RWPE1 (cell line): ENCODE measurements at regions of chr4 and their contacts with region 1.

Region 1: GRCh38 chr4:182938205-182938645 is 21.0 kb upstream of the DCTD start:
- DNase-seq: peak; percentile 68
- H3K27ac ChIP-seq: no peak overlapping the region
- CTCF ChIP-seq: peak; percentile 95

Region 2: DNA sequence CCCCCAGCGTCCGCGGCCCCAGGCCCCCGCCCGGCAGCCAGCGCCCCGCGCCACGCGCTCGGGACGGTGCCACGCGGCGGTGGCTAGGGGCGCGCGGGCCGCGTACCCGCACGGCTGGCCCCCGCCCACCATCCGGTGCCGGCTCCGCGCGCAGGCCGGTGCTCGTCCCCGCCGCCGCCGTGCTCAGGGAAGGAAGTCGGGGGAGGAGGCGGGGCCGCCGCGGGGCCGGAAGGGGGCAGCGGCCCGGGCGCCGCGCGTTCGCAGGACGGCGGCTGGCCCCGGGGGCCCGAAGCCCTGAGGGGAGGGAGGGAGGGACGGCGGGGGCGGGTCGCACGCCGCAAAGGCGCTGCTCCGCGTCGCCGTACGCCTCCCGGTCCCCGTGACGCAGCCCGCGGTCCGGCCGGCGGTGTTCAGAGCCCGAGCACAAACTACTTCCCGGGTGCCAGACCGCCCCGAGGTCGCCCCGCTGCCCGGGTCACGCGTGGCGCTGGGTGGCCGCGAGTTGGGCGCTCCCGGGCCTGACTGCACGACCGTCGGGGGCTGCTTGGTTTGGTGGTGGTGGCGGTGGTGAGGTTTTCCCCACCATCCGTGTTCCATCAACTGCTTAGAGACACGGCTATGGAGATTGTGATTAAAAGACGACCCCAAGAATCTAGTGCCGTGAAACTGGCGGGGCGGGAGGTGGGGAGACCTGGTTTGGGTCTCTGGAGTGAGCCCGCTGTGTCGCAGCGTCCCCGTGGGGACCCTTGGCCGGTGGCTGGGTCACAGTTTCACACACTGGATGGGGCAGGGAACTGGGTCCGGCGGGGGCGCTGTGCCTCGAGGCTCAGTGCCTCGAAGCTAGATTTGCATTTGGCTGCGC is 20.8 kb before region 1 on chr4 and contains the start of gene DCTD:
- CTCF ChIA-PET with region 1: no interaction called
- POLR2A ChIA-PET with region 1: no interaction called
- DNase-seq: peak; percentile 59
- H3K27ac ChIP-seq: peak within 1 kb of the TSS; percentile 90
- CTCF ChIP-seq: peak; percentile 44

Region 3: DNA sequence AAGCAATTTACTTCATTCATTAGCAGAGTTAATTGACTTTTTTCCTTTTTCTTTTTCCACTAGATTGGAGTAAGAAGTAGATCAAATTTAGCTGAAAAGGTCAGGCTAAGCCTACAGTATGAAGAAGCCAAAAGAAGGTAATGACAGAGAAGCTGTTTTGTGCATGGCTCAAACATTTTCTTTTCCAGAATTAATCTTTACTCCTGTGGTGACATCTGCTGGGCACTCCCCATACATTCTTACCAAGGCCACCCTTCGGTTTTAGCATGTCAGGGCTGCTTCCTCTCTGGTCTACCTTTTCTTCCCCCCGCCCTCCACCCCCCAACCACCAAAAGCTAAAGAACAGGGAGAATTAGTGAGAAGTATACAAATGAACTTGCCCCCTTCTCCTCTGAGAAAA is 311.6 kb after region 1 on chr4:
- CTCF ChIA-PET with region 1: interaction called, 11 read pairs
- POLR2A ChIA-PET with region 1: no interaction called
- DNase-seq: peak; percentile 48
- H3K27ac ChIP-seq: no peak overlapping the region
- CTCF ChIP-seq: peak; percentile 43

Region 4: GRCh38 chr4:183256756-183257385 is 318.6 kb after region 1 on chr4:
- CTCF ChIA-PET with region 1: interaction called, 24 read pairs
- POLR2A ChIA-PET with region 1: no interaction called
- DNase-seq: peak; percentile 54
- H3K27ac ChIP-seq: no peak overlapping the region
- CTCF ChIP-seq: peak; percentile 77

Region 5: DNA sequence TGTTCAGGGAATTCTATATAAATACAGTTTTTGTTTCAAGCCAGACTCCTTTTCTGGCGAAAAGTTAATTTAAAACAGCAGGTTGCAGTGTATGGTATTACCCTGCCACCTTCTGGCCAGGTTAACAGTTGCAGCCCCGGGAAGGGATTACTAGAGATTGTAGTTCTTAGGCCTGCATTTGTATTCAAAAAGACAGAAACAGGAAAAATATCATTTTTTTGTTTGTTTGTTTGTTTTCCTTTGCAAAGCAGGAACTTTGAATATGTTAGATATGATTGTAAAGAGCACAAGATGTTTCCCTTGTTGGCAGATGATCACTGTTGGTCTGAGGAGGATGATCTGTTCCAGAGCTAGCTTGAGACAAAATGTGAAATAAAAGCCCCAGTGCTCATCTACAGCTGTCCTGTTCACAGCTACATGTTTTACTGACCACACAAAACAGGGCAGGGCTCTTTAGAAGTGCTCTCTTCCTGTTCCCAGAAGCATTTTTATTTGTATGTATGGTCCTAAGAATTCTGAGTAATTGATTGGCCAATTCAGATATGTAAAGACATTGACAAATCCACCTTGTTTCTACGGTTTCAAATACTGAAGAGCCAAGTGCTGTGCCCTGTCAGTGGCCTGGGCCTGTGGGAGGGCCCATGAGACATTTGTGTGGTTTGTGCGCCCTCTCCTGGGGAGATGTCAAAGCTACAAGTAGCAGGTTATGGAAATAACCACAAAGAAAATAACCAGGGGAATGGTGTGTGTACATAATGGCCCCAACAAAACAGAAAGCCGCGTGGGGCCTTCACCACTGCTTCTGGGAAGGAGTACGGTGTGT is 323.9 kb after region 1 on chr4:
- CTCF ChIA-PET with region 1: interaction called, 24 read pairs
- POLR2A ChIA-PET with region 1: no interaction called
- DNase-seq: peak; percentile 59
- H3K27ac ChIP-seq: no peak overlapping the region
- CTCF ChIP-seq: peak; percentile 85